ENCODE measurements at regions of chr6 and their contacts with region 1.

Region 1: DNA sequence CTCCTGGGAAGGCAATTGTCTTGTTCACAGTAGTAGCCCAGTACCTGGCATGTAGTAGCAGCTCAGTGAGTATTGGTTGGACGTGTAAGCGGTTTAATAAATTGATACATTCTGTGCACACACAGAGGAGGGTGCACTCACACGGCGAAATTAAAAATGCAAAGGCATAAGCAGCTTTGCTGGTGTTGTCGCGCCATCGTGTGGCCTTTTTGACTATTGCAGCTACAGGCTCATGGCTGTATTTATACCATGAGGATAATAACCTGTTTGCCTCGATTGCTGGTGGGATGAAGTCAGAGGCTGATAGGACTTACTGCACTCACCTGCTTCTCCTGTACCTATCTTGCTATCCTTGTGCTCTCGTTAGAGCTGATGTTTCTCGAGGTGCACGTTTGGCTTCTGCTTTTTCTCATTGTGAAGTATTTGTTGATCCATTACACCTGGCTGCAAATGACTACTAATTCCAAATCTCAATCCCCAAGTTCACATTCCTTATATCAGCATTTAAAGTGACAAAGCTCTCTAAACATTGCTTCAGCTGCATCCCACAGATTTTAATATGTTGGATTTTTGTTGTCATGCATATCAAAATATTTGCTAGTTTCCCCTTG is 61.5 kb downstream of the TBXT start:
- DNase-seq: peak; percentile 67 to 95 (median 85)

Region 2: GRCh38 chr6:165884813-165885765 is 221.1 kb before region 1 on chr6:
- intact Hi-C with region 1: loop called (anchors 1 kb)
- DNase-seq: peak; percentile 54 to 97 (median 84)

Measured in posterior cingulate gyrus (tissue), 11 donors.